ENCODE measurements at regions of chr1 and their contacts with region 1.

Region 1: GRCh38 chr1:201551877-201552731 is 13.2 kb downstream of the NAV1 start:
- DNase-seq: peak; percentile 28 to 93 (median 89)
- H3K4me3 ChIP-seq: peak overlapping the region in 1 of 59 donors; percentile 28
- H3K27ac ChIP-seq: peak overlapping the region; percentile 72 to 96 (median 90)
- H3K27me3 ChIP-seq: no peaks in the 10 kb centered on the region
- CTCF ChIP-seq: peak in 5 of 56 donors; percentile 8 to 37 (median 16)

Region 2: DNA sequence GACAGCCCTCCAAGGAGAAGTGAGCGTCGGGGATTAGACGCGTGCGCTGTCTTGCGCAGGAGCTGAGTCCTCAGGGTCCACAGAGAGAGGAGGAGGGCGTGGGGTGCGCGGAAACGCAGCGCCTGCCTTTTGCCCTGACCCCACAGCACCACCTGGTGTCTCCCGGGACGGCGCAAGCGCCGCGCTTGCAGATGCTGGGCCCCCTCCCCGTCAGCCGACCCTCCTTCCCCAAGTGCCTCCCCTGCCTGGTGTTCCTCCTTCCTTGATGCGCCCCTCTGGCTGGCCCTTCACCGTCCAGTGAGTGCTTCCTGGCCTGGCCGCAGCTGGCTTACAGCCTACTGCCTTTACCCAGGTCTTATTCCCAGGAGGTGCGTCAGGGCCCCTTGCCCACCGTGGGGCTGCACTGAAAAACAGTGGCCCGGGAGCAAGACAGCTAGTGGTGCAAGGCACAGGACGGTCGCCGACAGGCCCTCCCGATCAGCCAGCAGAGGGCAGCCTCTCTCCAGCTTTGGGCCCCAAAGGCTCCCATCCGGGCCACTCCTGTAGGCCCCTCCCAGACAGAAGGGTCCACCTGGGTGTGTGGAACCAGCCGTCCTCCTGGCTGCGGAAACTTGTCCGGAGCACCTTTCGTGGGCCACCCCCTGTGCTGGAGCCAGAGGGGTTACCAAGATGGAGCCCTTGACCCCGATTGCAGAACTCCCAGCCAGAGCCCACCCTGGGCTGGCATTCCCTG is 70.2 kb before region 1 on chr1:
- intact Hi-C with region 1: no loop called
- DNase-seq: peak; percentile 45 to 93 (median 86)
- H3K4me3 ChIP-seq: peak overlapping the region in 49 of 59 donors; percentile 1 to 61 (median 41)
- H3K27ac ChIP-seq: peak overlapping the region; percentile 27 to 100 (median 89)
- H3K27me3 ChIP-seq: peaks cover 0 to 9% (median 0%) of the 10 kb centered on the region in 45 donors
- CTCF ChIP-seq: peak; percentile 59 to 99 (median 95)

Region 3: GRCh38 chr1:201538612-201539551 is 13.2 kb before region 1 on chr1 and contains the start of gene NAV1:
- intact Hi-C with region 1: loop called in 1 of 2 experiments (anchors 2 kb)
- DNase-seq: peak in 9 of 10 donors; percentile 50 to 83 (median 71)
- H3K4me3 ChIP-seq: peak within 1 kb of the TSS; percentile 63 to 91 (median 81)
- H3K27ac ChIP-seq: peak within 1 kb of the TSS; percentile 30 to 97 (median 92)
- H3K27me3 ChIP-seq: no peaks in the 10 kb centered on the region
- CTCF ChIP-seq: peak in 17 of 56 donors; percentile 1 to 35 (median 17)
- total RNA-seq, gene NAV1: 53.8 to 141 (median 77.6) TPM

Region 4: GRCh38 chr1:201660931-201661822 is 109.1 kb after region 1 on chr1:
- intact Hi-C with region 1: no loop called
- DNase-seq: no peak
- H3K4me3 ChIP-seq: no peak overlapping the region
- H3K27ac ChIP-seq: peak overlapping the region in 3 of 59 donors; percentile 10 to 52 (median 35)
- H3K27me3 ChIP-seq: no peaks in the 10 kb centered on the region
- CTCF ChIP-seq: no peak

Measured in dorsolateral prefrontal cortex (tissue), 120 donors.